Activated CD4-positive, alpha-beta T cell treated with anti-CD3 and anti-CD28 coated beads for 36 hours (primary cell): ENCODE measurements at regions of chr18 and their contacts with region 1.

Region 1: DNA sequence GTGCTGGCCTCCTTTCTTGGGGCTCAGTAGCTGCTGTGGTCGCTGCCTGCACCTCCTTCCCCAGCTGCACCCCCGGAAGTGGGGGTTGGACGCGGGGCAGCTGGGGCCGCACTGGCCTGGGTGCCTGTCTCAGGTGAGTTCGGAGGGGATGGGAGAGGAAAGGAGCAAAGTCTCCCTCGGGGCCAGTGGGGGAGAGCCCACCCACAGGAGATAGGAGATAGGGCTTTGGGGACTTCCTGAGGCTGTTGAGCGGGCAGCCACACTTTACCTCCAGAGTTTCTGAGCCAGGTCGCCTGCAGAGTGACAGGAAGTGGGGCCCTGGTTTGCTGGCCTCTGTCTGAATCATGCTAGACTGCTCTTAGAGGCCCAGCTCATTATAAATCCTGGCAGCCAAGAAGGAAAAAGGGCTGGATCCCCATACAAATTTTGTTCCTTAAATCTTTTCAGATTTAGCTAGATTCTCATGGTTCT is 8.1 kb downstream of the MBP start:
- DNase-seq: peak; percentile 79
- ATAC-seq: peak; percentile 85
- H3K4me3 Mint-ChIP-seq: peak overlapping the region; percentile 63
- H3K27ac Mint-ChIP-seq: peak overlapping the region; percentile 94
- H3K4me1 Mint-ChIP-seq: peaks cover 93% of the 10 kb centered on the region
- H3K27me3 Mint-ChIP-seq: no peaks in the 10 kb centered on the region

Region 2: DNA sequence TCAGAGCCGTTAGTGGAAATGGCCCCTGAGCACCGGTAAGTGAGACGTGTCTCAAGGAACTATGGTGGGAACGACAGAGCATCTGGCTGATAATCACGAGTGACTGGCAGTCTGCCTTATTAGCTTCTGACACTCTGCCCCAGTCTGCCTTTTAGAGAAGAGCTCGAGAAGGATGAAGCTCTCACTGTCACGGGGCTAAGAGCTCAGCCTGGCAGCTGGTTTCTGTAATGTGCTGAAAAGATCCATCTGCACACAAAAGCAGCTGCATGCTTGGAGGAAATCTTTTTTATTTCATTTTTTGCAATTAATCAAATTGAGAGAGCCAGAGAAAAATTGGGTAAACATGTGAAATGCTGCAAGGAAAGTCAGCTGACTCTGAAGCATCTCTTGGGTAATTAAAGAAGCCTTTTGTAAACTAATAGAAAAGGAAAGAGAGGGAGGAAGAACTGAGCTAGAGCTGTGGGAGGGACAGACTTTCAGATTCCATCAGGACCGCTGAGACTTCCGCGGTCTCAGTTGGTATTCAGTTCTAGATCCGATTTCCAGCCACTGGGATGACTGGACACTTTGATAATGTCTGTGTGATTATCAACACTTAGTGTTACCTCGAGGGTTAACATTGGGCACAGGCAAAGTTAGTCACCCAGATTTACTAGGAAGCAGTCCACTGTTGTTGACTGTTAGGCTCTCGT is 16.3 kb before region 1 on chr18:
- CTCF ChIA-PET with region 1: interaction called, 12 read pairs
- POLR2A ChIA-PET with region 1: interaction called, 7 read pairs
- intact Hi-C with region 1: loop called in 1 of 2 experiments (anchors 1 kb)
- DNase-seq: peak; percentile 69
- ATAC-seq: peak; percentile 79
- H3K4me3 Mint-ChIP-seq: peak overlapping the region; percentile 18
- H3K27ac Mint-ChIP-seq: peak overlapping the region; percentile 18
- H3K4me1 Mint-ChIP-seq: peaks cover 94% of the 10 kb centered on the region
- H3K27me3 Mint-ChIP-seq: no peaks in the 10 kb centered on the region